ENCODE measurements at regions of chr2 and their contacts with region 1.

Region 1: DNA sequence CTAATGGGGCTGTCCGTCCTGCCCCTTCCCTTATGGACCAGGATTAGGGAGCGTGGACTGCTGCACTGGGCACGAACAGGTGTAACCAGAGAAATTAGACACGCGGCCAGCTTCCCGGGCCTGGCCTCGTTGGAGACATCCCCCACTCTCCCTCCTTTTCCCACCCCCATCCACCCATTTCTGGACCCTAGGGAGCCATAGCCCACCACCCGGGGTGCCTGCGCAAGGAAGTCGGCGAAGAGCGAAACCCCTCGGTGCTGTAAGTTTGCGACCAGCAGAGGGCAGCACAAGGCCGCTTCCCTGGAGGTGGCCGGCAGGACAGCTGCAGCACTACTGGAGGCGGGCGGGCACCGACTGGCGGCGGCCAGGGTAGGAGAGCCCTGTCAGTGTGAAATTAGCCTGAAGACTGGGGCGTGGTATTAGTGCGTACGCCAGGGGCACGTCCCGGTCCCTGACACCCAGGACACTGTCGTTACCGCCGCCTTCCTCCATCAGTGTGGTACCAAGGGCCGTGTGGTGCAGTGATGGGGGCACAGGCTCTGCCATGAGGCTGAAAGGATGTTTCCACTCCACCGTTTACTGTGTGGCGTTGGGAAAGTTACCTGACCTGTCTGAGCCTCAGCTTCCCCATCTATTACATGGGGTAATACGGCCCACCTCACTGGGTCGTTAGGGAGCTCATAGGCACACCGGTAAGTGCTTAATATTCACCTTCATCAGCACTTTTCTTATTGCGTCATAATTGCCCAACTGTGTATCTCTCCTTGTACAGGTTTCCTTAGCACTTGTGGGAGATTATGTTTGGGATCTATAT is 36.0 kb upstream of the CD207 start:
- DNase-seq: peak; percentile 85
- H3K4me3 ChIP-seq: no peak overlapping the region
- H3K27ac ChIP-seq: no peak overlapping the region
- H3K4me1 ChIP-seq: peaks cover 0 to 7% (median 1%) of the 10 kb centered on the region in 4 donors
- H3K27me3 ChIP-seq: peaks cover 57% of the 10 kb centered on the region
- CTCF ChIP-seq: peak; percentile 84 to 89 (median 88)
- EP300 ChIP-seq: no peak
- POLR2A ChIP-seq: no peak

Region 2: DNA sequence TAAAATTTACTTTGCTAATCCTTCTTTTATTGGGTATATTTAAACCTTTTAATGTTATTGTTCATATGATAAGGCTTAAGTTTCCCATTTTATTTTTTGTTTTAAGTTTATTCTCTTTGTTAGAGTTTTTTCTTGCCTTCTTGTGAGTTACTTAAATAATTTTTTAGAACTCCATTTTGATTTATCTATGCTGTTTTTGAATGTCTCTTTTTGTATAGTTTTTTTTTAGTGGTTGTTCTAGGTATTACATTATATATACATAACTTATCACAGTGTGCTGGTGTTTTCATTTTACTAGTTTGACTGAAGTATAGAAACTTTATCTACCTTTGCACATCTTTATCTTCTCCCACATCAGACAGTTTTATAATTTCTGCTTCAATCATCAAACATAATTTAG is 268.5 kb before region 1 on chr2:
- in situ Hi-C with region 1: no loop called
- intact Hi-C with region 1: no loop called
- DNase-seq: no peak
- H3K4me3 ChIP-seq: no peak overlapping the region
- H3K27ac ChIP-seq: no peak overlapping the region
- H3K4me1 ChIP-seq: no peaks in the 10 kb centered on the region
- H3K27me3 ChIP-seq: no peaks in the 10 kb centered on the region
- CTCF ChIP-seq: peak in 2 of 5 experiments; percentile 10 to 25
- EP300 ChIP-seq: no peak
- POLR2A ChIP-seq: no peak

Region 3: DNA sequence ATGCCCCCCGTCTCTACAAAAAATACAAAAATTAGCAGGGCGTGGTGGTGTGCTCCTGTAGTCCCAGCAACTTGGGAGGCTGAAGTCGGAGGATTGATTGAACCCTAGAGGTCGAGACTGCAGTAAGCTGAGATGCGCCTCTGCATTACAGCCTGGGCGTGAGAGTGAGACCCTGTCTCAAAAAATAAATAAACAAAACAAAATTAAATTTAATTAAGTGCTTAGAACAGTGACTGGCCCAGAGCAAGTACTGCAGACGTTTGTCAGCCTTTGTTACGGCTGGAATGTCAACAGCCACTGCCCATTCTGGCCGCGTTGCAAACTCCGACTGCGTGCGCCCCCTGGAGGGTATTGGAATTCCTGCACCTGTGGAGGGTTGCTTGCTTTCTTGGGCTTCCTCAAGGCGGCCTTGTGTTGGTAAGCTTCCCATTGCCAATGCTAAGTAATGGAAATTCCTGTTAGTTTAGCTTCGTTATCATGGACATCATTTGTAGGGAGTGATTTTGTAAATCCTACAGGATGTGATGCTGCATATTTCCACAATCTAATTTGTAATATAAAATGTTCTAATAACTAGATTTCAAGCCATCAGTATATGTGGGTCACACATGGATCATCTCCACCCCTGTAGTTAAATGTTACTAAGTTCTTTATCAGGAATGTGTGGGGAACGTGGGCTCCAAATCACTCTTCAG is 48.2 kb after region 1 on chr2:
- in situ Hi-C with region 1: loop called in 1 of 4 experiments (anchors 10 kb)
- intact Hi-C with region 1: loop called (anchors 1 kb)
- DNase-seq: peak; percentile 83
- H3K4me3 ChIP-seq: no peak overlapping the region
- H3K27ac ChIP-seq: no peak overlapping the region
- H3K4me1 ChIP-seq: no peaks in the 10 kb centered on the region
- H3K27me3 ChIP-seq: peaks cover 23% of the 10 kb centered on the region
- CTCF ChIP-seq: peak; percentile 69 to 87 (median 83)
- EP300 ChIP-seq: no peak
- POLR2A ChIP-seq: no peak

Region 4: DNA sequence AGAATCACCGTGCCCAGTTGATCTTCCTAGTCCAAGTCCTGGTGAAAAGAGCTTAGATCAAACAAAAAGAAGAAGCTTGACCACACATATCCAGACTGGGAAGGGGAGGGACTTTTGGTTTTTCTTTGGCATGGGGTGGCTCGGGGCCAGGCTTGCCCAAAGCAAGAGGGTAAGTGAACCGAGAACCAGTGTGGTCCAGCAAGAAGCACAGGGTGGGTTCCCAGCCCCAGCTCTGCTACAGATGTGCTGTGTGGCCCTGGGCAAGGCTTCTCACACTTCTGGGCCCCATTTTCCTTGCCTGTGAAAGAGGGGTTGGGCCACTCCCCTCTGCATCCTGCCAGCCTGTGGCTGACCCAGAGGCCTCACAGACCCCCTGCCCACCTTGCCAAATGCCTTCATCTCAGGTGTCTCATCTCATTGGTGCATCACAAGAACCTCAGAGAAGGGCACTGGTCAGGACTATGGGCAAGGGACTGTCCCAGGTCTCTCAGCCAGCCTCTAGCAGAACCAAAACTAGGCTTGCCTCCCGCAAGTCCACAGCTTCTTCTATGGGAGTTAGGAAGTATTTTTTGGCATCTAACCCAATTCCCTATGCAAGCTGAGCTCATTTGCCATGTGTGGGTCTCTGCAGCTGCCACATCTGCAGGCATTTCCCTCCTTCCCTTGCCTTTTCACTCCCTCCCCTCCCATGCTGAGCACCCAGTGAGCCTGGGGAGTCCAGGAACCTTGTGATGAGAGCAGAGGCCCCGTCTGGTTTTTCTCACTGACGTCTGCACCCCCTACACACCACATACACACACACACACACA is 71.0 kb after region 1 on chr2:
- in situ Hi-C with region 1: loop called in 3 of 4 experiments (anchors 10 kb)
- intact Hi-C with region 1: loop called (anchors 5 kb)
- DNase-seq: no peak
- H3K4me3 ChIP-seq: no peak overlapping the region
- H3K27ac ChIP-seq: no peak overlapping the region
- H3K4me1 ChIP-seq: no peaks in the 10 kb centered on the region
- H3K27me3 ChIP-seq: peaks cover 23% of the 10 kb centered on the region
- CTCF ChIP-seq: no peak
- EP300 ChIP-seq: no peak
- POLR2A ChIP-seq: no peak

Region 5: GRCh38 chr2:70948337-70949003 is 76.9 kb after region 1 on chr2:
- in situ Hi-C with region 1: loop called in 3 of 4 experiments (anchors 10 kb)
- intact Hi-C with region 1: loop called (anchors 5 kb)
- DNase-seq: peak; percentile 80
- H3K4me3 ChIP-seq: peak overlapping the region in 2 of 4 donors; percentile 16 to 41
- H3K27ac ChIP-seq: no peak overlapping the region
- H3K4me1 ChIP-seq: peaks cover 0 to 7% (median 2%) of the 10 kb centered on the region in 4 donors
- H3K27me3 ChIP-seq: peaks cover 42% of the 10 kb centered on the region
- CTCF ChIP-seq: peak; percentile 70 to 86 (median 80)
- EP300 ChIP-seq: no peak
- POLR2A ChIP-seq: no peak

Region 6: DNA sequence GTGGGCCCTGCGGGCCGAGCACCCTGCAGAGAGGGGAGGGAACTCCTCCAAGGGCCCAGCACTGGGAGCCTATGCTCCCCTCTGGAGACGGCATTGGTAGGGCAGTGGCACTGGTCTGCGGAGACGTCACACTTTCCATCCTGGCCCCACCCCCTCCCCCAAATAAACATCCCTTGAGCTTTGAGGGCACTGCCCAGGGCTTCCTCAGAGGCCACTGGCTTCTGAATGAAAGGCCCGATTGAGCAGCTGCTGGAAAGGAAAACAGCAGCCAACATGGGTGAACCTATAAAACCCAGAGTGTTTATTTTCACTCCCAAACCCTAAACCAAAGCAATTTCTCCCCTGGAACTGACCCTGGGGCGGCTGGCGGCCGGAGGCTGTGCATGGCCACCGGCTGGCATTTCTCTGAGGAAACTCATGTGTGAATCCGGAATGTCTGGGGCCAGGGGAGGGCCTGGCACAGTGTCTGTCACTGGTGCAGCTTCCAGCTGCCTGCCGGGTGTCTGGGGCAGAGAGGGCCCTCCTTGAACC is 720.6 kb after region 1 on chr2:
- in situ Hi-C with region 1: no loop called
- intact Hi-C with region 1: no loop called
- DNase-seq: no peak
- H3K4me3 ChIP-seq: no peak overlapping the region
- H3K27ac ChIP-seq: peak overlapping the region in 2 of 4 donors; percentile 10 to 17
- H3K4me1 ChIP-seq: peaks cover 0 to 3% (median 0%) of the 10 kb centered on the region in 4 donors
- H3K27me3 ChIP-seq: no peaks in the 10 kb centered on the region
- CTCF ChIP-seq: no peak
- EP300 ChIP-seq: no peak
- POLR2A ChIP-seq: no peak